CD4-positive, alpha-beta T cell (primary cell): ENCODE measurements at regions of chr14 and their contacts with region 1.

Region 1: GRCh38 chr14:103528587-103529382 is at the start of gene TRMT61A:
- DNase-seq: peak; percentile 63 to 92 (median 74)
- ATAC-seq: peak; percentile 91
- H3K4me3 ChIP-seq: peak within 1 kb of the TSS; percentile 93
- H3K4me3 Mint-ChIP-seq: peak within 1 kb of the TSS; percentile 96
- H3K27ac ChIP-seq: peak within 1 kb of the TSS; percentile 61 to 77
- H3K27ac Mint-ChIP-seq: peak within 1 kb of the TSS; percentile 92
- H3K4me1 ChIP-seq: peaks cover 45% of the 10 kb centered on the region
- H3K4me1 Mint-ChIP-seq: peaks cover 36% of the 10 kb centered on the region
- H3K27me3 ChIP-seq: no peaks in the 10 kb centered on the region
- H3K27me3 Mint-ChIP-seq: peaks cover 4% of the 10 kb centered on the region
- CTCF ChIP-seq: no peak
- total RNA-seq, gene TRMT61A: 9.2 to 9.8 TPM

Region 2: GRCh38 chr14:102644523-102644922 is 884.3 kb before region 1 on chr14:
- CTCF ChIA-PET with region 1: no interaction called
- POLR2A ChIA-PET with region 1: no interaction called
- intact Hi-C with region 1: no loop called
- DNase-seq: peak in 1 of 14 experiments; percentile 7
- ATAC-seq: no peak
- H3K4me3 ChIP-seq: no peak overlapping the region
- H3K4me3 Mint-ChIP-seq: no peak overlapping the region
- H3K27ac ChIP-seq: no peak overlapping the region
- H3K27ac Mint-ChIP-seq: no peak overlapping the region
- H3K4me1 ChIP-seq: peaks cover 19% of the 10 kb centered on the region
- H3K4me1 Mint-ChIP-seq: peaks cover 70% of the 10 kb centered on the region
- H3K27me3 ChIP-seq: no peaks in the 10 kb centered on the region
- H3K27me3 Mint-ChIP-seq: no peaks in the 10 kb centered on the region
- CTCF ChIP-seq: no peak

Region 3: DNA sequence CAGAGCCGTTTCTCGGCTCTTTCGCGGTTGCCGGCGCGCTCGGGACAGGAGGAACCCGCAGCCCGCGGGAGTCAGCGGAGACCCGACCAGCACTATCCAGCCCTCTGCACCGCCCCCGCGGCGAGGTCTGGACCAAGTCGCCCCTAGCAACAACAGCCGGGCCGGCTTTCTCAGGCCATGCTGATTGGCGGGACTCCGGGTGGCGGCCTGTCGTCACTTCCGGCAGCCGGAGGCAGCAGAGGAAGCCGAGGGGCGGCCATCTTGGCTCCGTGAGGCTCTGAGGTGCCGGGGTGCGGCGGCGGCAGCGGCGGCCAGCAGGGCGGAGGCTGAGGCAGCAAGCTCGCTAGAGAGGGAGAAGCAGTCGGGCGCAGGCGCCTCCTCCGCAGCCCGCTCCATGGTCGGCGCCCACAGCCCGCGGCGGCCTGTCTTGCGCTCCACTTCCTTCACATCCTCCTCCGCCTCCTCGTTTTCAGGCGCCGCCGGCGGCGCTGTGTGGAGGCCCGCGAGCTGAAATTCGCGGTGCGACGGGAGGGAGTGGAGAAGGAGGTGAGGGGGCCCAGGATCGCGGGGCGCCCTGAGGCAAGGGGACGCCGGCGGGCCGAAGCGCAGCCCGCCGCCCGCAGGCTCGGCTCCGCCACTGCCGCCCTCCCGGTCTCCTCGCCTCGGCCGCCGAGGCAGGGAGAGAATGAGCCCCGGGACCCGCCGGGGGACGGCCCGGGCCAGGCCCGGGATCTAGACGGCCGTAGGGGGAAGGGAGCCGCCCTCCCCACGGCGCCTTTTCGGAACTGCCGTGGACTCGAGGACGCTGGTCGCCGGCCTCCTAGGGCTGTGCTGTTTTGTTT is 143.4 kb before region 1 on chr14 and contains the start of gene MARK3:
- CTCF ChIA-PET with region 1: no interaction called
- POLR2A ChIA-PET with region 1: no interaction called
- intact Hi-C with region 1: loop called in 1 of 2 experiments (anchors 2 kb)
- DNase-seq: peak; percentile 91 to 98 (median 94)
- ATAC-seq: peak; percentile 89
- H3K4me3 ChIP-seq: peak within 1 kb of the TSS; percentile 89
- H3K4me3 Mint-ChIP-seq: peak within 1 kb of the TSS; percentile 99
- H3K27ac ChIP-seq: peak within 1 kb of the TSS; percentile 84 to 92
- H3K27ac Mint-ChIP-seq: peak within 1 kb of the TSS; percentile 96
- H3K4me1 ChIP-seq: peaks cover 27% of the 10 kb centered on the region
- H3K4me1 Mint-ChIP-seq: peaks cover 42% of the 10 kb centered on the region
- H3K27me3 ChIP-seq: no peaks in the 10 kb centered on the region
- H3K27me3 Mint-ChIP-seq: no peaks in the 10 kb centered on the region
- CTCF ChIP-seq: peak; percentile 42
- total RNA-seq, gene MARK3: 107 TPM

Region 4: GRCh38 chr14:104116756-104117255 is 588.0 kb after region 1 on chr14:
- CTCF ChIA-PET with region 1: no interaction called
- POLR2A ChIA-PET with region 1: no interaction called
- intact Hi-C with region 1: no loop called
- DNase-seq: peak in 1 of 14 experiments; percentile 33
- ATAC-seq: peak; percentile 34
- H3K4me3 ChIP-seq: peak overlapping the region; percentile 37
- H3K4me3 Mint-ChIP-seq: no peak overlapping the region
- H3K27ac ChIP-seq: no peak overlapping the region
- H3K27ac Mint-ChIP-seq: no peak overlapping the region
- H3K4me1 ChIP-seq: peaks cover 4% of the 10 kb centered on the region
- H3K4me1 Mint-ChIP-seq: no peaks in the 10 kb centered on the region
- H3K27me3 ChIP-seq: peaks cover 27 to 39% of the 10 kb centered on the region in 2 experiments
- H3K27me3 Mint-ChIP-seq: peaks cover 37% of the 10 kb centered on the region
- CTCF ChIP-seq: no peak

Region 5: GRCh38 chr14:104424406-104425072 is 895.8 kb after region 1 on chr14:
- CTCF ChIA-PET with region 1: no interaction called
- POLR2A ChIA-PET with region 1: no interaction called
- intact Hi-C with region 1: no loop called
- DNase-seq: peak in 1 of 14 experiments; percentile 25
- ATAC-seq: no peak
- H3K4me3 ChIP-seq: no peak overlapping the region
- H3K4me3 Mint-ChIP-seq: no peak overlapping the region
- H3K27ac ChIP-seq: no peak overlapping the region
- H3K27ac Mint-ChIP-seq: no peak overlapping the region
- H3K4me1 ChIP-seq: no peaks in the 10 kb centered on the region
- H3K4me1 Mint-ChIP-seq: no peaks in the 10 kb centered on the region
- H3K27me3 ChIP-seq: no peaks in the 10 kb centered on the region
- H3K27me3 Mint-ChIP-seq: peaks cover 5% of the 10 kb centered on the region
- CTCF ChIP-seq: no peak

Region 6: DNA sequence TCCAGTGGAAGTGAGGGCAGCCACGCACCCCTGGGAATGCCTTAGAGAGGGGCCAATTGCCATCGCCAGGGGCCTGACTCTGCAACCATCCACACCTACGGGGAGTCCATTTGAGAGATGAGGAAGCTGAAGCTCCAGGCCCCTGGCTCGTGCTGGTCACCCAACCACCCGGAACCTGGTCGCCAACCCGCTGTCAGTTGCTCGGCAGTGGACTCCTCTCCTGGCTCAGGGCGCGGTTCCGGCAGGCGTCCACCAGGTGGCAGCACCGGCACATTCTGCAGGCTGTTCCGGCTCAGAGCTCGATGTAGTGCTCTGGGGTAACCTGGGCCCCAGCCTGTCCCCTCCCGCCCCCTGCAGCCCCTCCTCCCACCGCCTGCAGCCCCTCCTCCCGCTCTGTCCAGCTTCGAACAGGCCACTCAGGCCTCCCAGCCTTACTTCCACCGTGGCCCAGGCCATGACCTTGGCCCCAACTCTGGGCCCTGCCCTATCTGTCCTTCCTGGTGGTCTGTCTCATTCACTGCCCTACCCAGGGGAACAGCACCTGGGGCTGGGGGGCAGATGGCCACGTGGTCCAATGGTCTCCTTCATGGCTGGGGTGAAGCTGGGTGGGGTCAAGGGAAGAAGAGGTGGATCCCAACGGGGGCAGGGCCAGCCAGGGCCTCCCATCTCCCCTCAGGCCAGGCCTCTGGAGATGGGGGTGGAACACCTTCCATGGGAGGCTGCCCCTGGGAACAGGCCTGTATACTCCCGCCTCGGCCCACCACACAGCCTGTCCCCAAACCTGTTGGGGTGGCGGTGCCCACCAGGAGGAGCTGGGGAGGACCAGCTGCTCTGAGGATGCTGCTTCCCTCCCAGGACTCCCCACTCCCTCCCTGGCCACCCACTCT is 1239.9 kb after region 1 on chr14:
- CTCF ChIA-PET with region 1: no interaction called
- POLR2A ChIA-PET with region 1: no interaction called
- intact Hi-C with region 1: no loop called
- DNase-seq: peak; percentile 81 to 97 (median 91)
- ATAC-seq: peak; percentile 98
- H3K4me3 ChIP-seq: no peak overlapping the region
- H3K4me3 Mint-ChIP-seq: no peak overlapping the region
- H3K27ac ChIP-seq: no peak overlapping the region
- H3K27ac Mint-ChIP-seq: no peak overlapping the region
- H3K4me1 ChIP-seq: peaks cover 9% of the 10 kb centered on the region
- H3K4me1 Mint-ChIP-seq: no peaks in the 10 kb centered on the region
- H3K27me3 ChIP-seq: no peaks in the 10 kb centered on the region
- H3K27me3 Mint-ChIP-seq: no peaks in the 10 kb centered on the region
- CTCF ChIP-seq: peak; percentile 94